ENCODE measurements at regions of chr1 and their contacts with region 1.

Region 1: GRCh38 chr1:217924924-217925323 is 293.8 kb downstream of the SPATA17 start:
- DNase-seq: no peak
- ATAC-seq: no peak
- H3K4me3 ChIP-seq: no peak overlapping the region
- H3K27ac ChIP-seq: no peak overlapping the region
- H3K4me1 ChIP-seq: no peaks in the 10 kb centered on the region
- H3K27me3 ChIP-seq: peaks cover 0 to 7% (median 4%) of the 10 kb centered on the region in 3 donors
- CTCF ChIP-seq: no peak
- POLR2A ChIP-seq: no peak

Region 2: DNA sequence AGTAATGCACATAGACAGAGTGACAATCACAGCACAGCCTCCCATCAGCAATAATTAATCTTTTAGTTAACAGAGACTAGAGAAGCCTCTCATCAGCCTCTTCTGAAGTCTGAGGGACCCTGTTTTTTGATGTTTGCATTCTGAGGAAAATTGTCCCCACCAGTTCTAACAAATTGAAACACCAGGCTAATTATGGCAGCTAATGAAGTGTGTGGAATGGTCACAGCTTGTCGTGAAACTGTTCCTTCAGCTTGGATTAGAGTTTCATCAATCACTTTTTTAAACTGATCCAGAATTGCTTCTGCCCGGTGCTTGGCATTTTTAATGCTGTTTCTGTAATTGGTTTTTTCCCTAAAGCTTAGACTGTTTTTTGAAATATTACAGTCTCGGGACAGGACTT is 85.8 kb before region 1 on chr1:
- in situ Hi-C with region 1: no loop called
- intact Hi-C with region 1: no loop called
- DNase-seq: no peak
- ATAC-seq: no peak
- H3K4me3 ChIP-seq: no peak overlapping the region
- H3K27ac ChIP-seq: no peak overlapping the region
- H3K4me1 ChIP-seq: no peaks in the 10 kb centered on the region
- H3K27me3 ChIP-seq: no peaks in the 10 kb centered on the region
- CTCF ChIP-seq: no peak
- POLR2A ChIP-seq: no peak

Region 3: DNA sequence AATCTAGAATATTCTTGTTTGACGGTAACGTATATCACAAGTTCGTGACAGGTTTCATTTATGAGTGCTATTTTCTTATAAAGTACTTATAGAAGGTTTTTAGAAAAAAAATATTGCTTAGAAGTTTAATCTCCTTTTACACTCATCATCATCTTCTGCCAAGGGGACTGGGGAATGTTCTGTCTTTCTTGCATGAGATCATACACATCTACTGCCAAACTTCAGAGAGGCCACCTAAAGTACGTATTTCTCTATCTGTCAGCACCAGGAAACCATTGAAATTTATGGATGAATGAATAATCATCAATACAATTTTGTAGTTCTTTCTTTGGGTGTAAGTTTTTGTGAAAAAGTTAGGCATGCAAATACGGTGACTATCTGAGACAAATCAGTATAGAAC is 48.0 kb before region 1 on chr1:
- in situ Hi-C with region 1: loop called in 1 of 4 experiments (anchors 10 kb)
- intact Hi-C with region 1: no loop called
- DNase-seq: no peak
- ATAC-seq: no peak
- H3K4me3 ChIP-seq: no peak overlapping the region
- H3K27ac ChIP-seq: no peak overlapping the region
- H3K4me1 ChIP-seq: no peaks in the 10 kb centered on the region
- H3K27me3 ChIP-seq: no peaks in the 10 kb centered on the region
- CTCF ChIP-seq: no peak
- POLR2A ChIP-seq: no peak